Activated CD8-positive, alpha-beta T cell treated with anti-CD3 and anti-CD28 coated beads for 36 hours (primary cell): ENCODE measurements at regions of chr1 and their contacts with region 1.

Region 1: DNA sequence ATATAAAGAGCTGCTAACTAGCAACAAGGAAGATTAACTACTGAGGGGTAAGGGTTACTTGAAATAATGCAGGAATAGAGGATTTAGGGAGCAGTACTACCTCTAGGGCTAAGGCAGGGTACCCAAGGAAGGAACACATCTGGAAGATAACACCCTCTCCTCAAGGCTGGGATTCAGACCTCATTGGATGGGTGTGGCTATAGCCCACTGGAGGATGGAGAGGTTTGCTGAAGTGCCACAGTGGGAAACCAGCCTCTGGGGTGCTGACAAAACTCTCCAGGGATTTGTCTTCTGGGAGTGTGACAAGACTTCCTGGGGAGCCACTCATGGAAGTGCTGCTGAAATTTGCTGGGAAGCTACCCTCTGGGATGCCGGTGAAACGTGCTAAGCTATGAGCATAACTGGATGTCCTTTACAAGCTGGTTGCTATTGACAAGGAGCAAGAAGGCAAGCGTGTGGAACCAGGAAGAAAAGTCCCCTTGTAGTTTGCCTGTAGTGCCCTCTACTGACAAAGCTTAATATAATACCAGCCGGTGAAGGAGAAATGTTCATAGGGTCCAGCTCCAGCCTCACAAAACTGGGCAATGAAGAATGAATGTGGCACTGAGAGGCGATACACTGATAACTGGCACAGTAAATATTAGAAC is 122.8 kb upstream of the USP24 start:
- DNase-seq: peak; percentile 32
- ATAC-seq: peak; percentile 62
- H3K4me3 Mint-ChIP-seq: no peak overlapping the region
- H3K27ac Mint-ChIP-seq: no peak overlapping the region
- H3K4me1 Mint-ChIP-seq: peaks cover 2% of the 10 kb centered on the region
- H3K27me3 Mint-ChIP-seq: no peaks in the 10 kb centered on the region
- CTCF ChIP-seq: peak; percentile 46

Region 2: GRCh38 chr1:55007625-55008024 is 330.3 kb before region 1 on chr1:
- CTCF ChIA-PET with region 1: no interaction called
- POLR2A ChIA-PET with region 1: no interaction called
- intact Hi-C with region 1: no loop called
- DNase-seq: no peak
- ATAC-seq: no peak
- H3K4me3 Mint-ChIP-seq: no peak overlapping the region
- H3K27ac Mint-ChIP-seq: no peak overlapping the region
- H3K4me1 Mint-ChIP-seq: no peaks in the 10 kb centered on the region
- H3K27me3 Mint-ChIP-seq: no peaks in the 10 kb centered on the region
- CTCF ChIP-seq: no peak

Region 3: DNA sequence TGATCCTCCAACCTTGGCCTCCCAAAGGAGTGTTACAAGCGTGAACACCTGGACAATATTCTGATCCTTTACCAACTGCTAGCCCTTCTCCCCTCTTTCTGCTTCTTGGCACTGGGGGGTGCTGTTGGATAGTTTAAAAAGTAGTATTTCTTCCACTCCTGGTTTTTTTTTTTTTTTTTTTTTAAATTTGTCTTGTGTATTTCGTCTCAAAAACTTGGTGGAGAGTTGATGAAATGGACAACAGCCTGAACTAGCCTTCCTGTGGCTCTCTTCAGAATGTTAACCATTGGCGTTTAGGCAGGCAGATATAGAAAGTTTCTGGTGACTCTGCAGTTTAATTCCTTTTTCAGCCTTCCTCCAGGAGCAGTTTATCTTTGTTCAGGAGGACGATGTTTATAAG is 53.1 kb before region 1 on chr1:
- CTCF ChIA-PET with region 1: interaction called, 18 read pairs
- POLR2A ChIA-PET with region 1: no interaction called
- intact Hi-C with region 1: loop called (anchors 5 kb)
- DNase-seq: peak; percentile 48
- ATAC-seq: no peak
- H3K4me3 Mint-ChIP-seq: no peak overlapping the region
- H3K27ac Mint-ChIP-seq: no peak overlapping the region
- H3K4me1 Mint-ChIP-seq: peaks cover 22% of the 10 kb centered on the region
- H3K27me3 Mint-ChIP-seq: no peaks in the 10 kb centered on the region
- CTCF ChIP-seq: peak; percentile 68

Region 4: DNA sequence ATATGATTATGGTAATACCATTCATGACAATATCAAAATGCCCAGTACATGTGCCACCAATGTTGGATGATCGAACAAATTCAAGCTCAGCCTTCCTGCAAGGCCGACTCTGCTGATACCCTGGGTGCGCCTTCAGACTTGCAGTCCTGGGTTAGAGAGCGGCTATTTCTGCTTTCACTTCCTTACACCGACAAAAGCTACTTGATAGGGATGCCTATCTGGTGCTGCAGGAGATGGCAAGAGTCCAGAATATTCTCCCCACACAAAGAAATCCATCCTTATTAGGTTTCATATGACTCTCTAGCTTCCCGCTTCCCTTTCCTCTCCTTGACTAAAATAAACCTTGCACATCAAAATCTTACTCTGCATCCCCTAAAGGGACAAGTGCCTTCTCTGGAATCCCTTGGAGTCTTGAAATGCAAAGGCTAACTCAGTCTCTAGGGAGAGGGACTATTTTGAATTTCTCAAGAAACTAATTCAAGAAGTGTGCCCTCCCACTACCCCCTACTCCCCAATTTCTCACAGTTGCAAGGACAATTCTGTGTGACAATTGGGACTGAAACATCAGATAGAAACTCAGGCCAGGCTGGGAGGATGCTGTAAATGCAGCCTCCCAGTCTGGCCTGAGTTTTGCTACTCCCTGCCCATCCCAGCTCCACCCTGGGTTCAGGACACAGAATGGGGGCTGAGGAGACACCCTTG is 19.7 kb before region 1 on chr1:
- CTCF ChIA-PET with region 1: interaction called, 12 read pairs
- POLR2A ChIA-PET with region 1: no interaction called
- intact Hi-C with region 1: no loop called
- DNase-seq: no peak
- ATAC-seq: no peak
- H3K4me3 Mint-ChIP-seq: no peak overlapping the region
- H3K27ac Mint-ChIP-seq: no peak overlapping the region
- H3K4me1 Mint-ChIP-seq: peaks cover 2% of the 10 kb centered on the region
- H3K27me3 Mint-ChIP-seq: no peaks in the 10 kb centered on the region
- CTCF ChIP-seq: no peak

Region 5: GRCh38 chr1:55375617-55376258 is 37.8 kb after region 1 on chr1:
- CTCF ChIA-PET with region 1: interaction called, 11 read pairs
- POLR2A ChIA-PET with region 1: no interaction called
- intact Hi-C with region 1: no loop called
- DNase-seq: peak; percentile 46
- ATAC-seq: peak; percentile 45
- H3K4me3 Mint-ChIP-seq: no peak overlapping the region
- H3K27ac Mint-ChIP-seq: no peak overlapping the region
- H3K4me1 Mint-ChIP-seq: no peaks in the 10 kb centered on the region
- H3K27me3 Mint-ChIP-seq: no peaks in the 10 kb centered on the region
- CTCF ChIP-seq: peak; percentile 95